ENCODE measurements at regions of chr14 and their contacts with region 1.

Region 1: DNA sequence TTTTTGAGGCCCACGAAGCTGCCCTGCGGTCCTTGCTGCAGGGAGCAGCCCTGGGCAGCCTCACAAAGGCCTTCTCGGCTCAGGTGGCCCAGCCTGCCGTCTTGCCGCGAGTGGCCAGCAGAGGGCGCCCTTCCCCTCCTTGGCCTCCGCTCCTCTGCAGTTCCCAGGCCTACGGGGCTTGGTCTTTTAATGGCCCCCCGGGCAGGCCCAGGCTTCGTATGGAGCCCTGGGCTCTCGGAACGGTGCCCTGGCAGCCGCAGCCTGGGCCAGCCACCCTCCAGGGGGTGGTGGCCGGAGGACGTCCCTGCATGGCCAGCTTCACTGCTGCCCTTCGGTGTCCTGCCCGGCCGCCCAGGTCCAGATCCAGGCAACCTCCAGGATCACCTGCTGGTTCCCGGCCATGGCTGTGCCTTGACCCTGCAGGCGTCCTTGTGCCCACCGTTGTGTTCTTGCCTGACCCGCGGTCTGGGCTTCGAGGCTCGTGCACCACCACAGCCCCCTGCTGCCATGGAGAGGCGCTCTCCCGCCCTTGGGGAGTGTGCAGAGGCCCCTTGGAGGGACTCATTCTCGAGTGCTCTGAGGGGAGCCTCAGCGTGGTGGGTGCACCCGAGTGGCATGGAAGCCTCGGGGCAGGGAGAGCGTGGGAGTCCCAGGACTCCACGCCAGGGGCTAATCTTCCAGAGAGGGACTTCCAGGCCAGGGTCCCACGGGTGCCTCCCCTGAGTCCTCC is 9.4 kb downstream of the ASPG start:
- DNase-seq: peak; percentile 47 to 63
- ATAC-seq: peak; percentile 31 to 67 (median 60)
- H3K4me3 ChIP-seq: no peak overlapping the region
- H3K27ac ChIP-seq: no peak overlapping the region
- H3K4me1 ChIP-seq: peaks cover 0 to 6% (median 0%) of the 10 kb centered on the region in 9 donors
- H3K27me3 ChIP-seq: peaks cover 0 to 21% (median 10%) of the 10 kb centered on the region in 7 donors
- CTCF ChIP-seq: peak; percentile 81 to 93 (median 89)

Region 2: DNA sequence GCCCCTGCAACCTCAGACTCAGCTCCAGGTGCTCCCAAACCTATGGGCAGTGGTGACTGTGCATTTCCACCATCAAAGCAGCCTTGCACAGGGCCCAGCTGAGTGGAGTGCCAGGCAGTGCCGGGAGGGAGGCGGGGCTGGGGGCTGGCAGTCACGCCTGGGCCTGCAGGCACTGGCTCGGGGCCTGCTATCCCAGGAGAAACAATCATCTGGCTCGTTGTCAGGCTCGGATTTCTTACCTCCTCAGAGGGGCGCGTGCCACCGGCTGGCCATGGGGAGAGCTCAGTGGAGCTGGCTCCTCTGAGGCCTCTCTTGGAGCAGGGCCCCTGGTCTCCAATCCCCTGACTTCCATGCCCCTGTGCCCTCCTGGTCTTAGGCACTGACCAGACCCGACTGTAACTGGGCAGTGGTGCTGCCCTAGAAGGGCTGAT is 227.3 kb before region 1 on chr14:
- intact Hi-C with region 1: no loop called
- DNase-seq: peak; percentile 71 to 72
- ATAC-seq: peak; percentile 56 to 86 (median 74)
- H3K4me3 ChIP-seq: no peak overlapping the region
- H3K27ac ChIP-seq: peak overlapping the region; percentile 59 to 87 (median 80)
- H3K4me1 ChIP-seq: peaks cover 10 to 46% (median 22%) of the 10 kb centered on the region in 9 donors
- H3K27me3 ChIP-seq: no peaks in the 10 kb centered on the region
- CTCF ChIP-seq: no peak

Region 3: DNA sequence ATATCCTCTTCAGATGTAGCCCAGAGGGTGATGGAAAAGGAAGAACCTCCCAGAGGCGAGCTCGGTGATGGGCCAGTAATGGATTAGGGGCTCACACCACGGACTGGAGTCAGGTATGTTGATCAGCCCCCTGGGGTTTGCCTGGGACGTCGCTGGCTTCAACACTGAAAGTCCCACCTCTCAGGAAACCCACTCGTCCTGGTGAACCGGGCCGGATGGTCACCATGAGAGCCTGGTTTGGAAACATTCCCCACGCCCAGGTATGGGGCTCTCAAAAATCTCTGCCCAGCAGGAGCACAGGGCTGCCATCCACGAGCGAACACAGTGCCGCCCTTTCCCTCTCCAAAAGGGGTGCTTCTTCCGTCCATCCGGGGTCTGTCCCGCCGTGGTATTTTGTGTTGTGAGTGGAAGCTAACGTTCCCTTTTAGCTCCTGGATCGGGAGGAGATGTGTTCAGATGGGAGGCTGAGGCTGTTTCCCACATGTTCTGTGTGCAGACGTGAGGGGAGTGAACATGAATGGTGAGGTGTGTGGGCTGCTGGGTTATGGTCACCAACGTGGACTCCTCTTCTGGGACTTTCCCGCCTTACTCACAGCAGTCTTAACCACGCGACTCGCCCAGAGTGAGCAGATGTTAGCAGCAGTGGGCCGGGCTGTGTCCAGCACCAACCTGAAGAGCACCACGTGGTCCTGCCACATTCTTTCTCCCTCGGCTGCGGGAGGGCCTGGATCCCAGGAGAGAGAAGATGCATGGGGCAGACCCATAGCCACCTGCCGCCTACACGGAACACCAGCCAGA is 182.7 kb after region 1 on chr14:
- intact Hi-C with region 1: no loop called
- DNase-seq: no peak
- ATAC-seq: no peak
- H3K4me3 ChIP-seq: no peak overlapping the region
- H3K27ac ChIP-seq: no peak overlapping the region
- H3K4me1 ChIP-seq: peaks cover 0 to 6% (median 0%) of the 10 kb centered on the region in 9 donors
- H3K27me3 ChIP-seq: peaks cover 0 to 17% (median 0%) of the 10 kb centered on the region in 7 donors
- CTCF ChIP-seq: no peak

Region 4: GRCh38 chr14:104573930-104574329 is 479.1 kb after region 1 on chr14:
- intact Hi-C with region 1: loop called in 1 of 10 experiments (anchors 5 kb)
- DNase-seq: peak in 1 of 2 donors; percentile 54
- ATAC-seq: peak in 7 of 8 donors; percentile 32 to 68 (median 52)
- H3K4me3 ChIP-seq: no peak overlapping the region
- H3K27ac ChIP-seq: peak overlapping the region in 1 of 10 donors; percentile 10
- H3K4me1 ChIP-seq: peaks cover 0 to 39% (median 23%) of the 10 kb centered on the region in 9 donors
- H3K27me3 ChIP-seq: peaks cover 0 to 38% (median 30%) of the 10 kb centered on the region in 7 donors
- CTCF ChIP-seq: no peak

Region 5: GRCh38 chr14:104639889-104640548 is 545.1 kb after region 1 on chr14:
- intact Hi-C with region 1: loop called in 3 of 10 experiments (anchors 5 to 10 kb)
- DNase-seq: peak; percentile 48 to 62
- ATAC-seq: peak; percentile 77 to 95 (median 86)
- H3K4me3 ChIP-seq: no peak overlapping the region
- H3K27ac ChIP-seq: no peak overlapping the region
- H3K4me1 ChIP-seq: peaks cover 0 to 16% (median 4%) of the 10 kb centered on the region in 9 donors
- H3K27me3 ChIP-seq: peaks cover 0 to 46% (median 20%) of the 10 kb centered on the region in 7 donors
- CTCF ChIP-seq: peak; percentile 75 to 94 (median 92)

Measured in heart right ventricle (tissue), 16 donors.